ENCODE measurements at regions of chr7 and their contacts with region 1.

Region 1: DNA sequence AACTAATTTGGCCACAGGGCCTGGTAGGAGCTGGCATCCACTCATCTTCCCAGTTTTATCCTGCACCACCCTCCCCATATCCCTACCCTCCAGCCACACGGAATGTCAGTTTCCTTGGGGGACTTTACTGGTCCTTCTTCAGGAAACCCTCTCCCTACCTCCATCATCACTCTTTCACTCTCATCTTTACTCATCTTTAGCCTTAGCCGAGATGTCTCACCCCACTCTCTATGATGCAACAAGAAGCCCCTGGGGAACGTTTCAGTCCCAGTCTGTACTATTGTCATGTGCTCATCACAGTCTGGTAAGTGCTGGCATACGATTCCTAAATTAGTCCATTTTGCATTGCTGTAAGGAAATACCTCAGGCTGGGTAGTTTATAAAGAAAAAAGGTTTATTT is 34.9 kb upstream of the TMEM248 start:
- DNase-seq: no peak
- H3K4me3 Mint-ChIP-seq: no peak overlapping the region
- H3K27ac Mint-ChIP-seq: no peak overlapping the region
- H3K4me1 Mint-ChIP-seq: peaks cover 17% of the 10 kb centered on the region
- H3K27me3 Mint-ChIP-seq: peaks cover 1% of the 10 kb centered on the region

Region 2: DNA sequence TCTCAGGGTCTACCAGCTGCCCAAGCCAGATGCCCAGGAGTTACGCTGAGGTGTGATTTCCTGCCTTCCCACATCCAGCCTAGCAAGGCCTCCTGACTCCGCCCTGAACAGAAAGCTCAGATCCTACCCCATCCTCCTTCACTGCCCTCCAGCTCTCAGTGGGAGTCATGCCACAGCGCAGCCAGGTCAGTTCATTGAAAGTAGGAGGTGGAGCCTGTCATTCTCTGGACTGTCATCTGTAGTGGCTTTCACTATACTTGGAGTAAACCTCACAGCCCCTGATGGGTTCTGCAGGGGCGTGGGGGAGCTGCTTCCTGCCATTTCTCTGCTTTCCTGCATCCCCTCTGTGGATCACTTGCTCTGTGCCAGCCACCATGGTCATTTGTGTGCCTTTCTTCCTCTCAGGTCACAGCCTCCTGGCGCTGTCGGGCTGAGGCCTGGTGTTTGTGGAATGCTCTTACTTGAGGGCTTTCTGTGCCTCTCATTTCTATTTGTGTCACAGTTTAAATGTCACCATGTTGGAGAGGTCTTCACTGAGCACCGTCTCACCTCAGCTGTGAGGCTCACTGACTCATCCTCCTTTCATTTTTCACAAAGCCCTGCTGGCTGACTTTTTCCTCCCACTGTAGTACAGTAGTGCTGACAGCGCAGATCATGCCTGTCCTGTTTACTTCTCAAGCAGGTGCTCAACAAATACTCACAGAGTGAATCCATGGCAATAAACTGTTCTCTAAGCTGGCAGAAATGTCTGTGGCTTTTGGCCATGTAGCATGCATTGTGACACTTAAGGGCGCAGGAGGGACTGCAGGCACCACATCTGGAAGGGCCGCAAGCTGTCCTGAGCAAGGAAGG is 26.1 kb before region 1 on chr7:
- intact Hi-C with region 1: loop called (anchors 1 kb)
- DNase-seq: peak; percentile 14
- H3K4me3 Mint-ChIP-seq: peak overlapping the region; percentile 72
- H3K27ac Mint-ChIP-seq: peak overlapping the region; percentile 99
- H3K4me1 Mint-ChIP-seq: peaks cover 21% of the 10 kb centered on the region
- H3K27me3 Mint-ChIP-seq: no peaks in the 10 kb centered on the region

Region 3: DNA sequence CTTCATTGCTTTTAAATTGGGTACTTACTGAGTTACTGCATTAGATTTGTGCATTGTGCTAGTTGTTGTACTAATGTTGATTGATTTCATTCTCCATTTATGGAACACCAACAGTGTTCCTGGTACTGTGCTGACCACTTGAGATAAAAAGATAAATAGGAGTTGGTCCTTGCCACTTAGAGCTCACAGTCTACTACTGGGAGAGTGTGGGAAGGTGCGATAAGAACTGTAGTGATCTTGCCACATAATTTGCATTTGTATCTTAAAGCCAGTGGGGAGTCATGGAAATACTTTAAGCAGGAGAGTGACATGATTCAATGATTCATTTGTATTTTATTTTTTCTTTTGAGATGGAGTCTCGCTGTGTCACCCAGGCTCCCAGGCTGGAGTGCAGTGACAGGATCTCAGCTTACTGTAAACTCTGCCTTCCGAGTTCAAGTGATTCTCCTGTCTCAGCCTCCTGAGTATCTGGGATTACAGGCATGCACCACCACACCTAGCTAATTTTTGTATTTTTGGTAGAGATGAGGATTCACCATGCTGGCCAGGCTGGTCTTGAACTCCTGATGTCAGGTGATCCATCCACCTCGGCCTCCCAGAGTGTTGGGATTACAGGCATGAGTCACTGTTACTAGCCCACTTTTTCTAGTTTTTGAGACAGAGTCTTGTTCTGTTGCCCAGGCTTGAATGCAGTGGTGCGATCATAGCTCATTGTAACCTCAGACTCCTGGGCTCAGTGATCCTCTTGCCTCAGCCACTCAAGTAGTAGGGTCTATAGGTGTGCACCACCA is 16.3 kb before region 1 on chr7:
- intact Hi-C with region 1: loop called (anchors 1 kb)
- DNase-seq: no peak
- H3K4me3 Mint-ChIP-seq: no peak overlapping the region
- H3K27ac Mint-ChIP-seq: peak overlapping the region; percentile 35
- H3K4me1 Mint-ChIP-seq: no peaks in the 10 kb centered on the region
- H3K27me3 Mint-ChIP-seq: no peaks in the 10 kb centered on the region

Region 4: GRCh38 chr7:66920769-66921395 is 34.7 kb after region 1 on chr7 and contains the start of gene TMEM248:
- intact Hi-C with region 1: no loop called
- DNase-seq: peak; percentile 90
- H3K4me3 Mint-ChIP-seq: peak within 1 kb of the TSS; percentile 98
- H3K27ac Mint-ChIP-seq: peak within 1 kb of the TSS; percentile 98
- H3K4me1 Mint-ChIP-seq: peaks cover 21% of the 10 kb centered on the region
- H3K27me3 Mint-ChIP-seq: no peaks in the 10 kb centered on the region
- total RNA-seq, gene TMEM248: 83.6 and 95.6 TPM in 2 replicates

Region 5: GRCh38 chr7:67006971-67007370 is 120.8 kb after region 1 on chr7:
- intact Hi-C with region 1: no loop called
- DNase-seq: no peak
- H3K4me3 Mint-ChIP-seq: no peak overlapping the region
- H3K27ac Mint-ChIP-seq: no peak overlapping the region
- H3K4me1 Mint-ChIP-seq: no peaks in the 10 kb centered on the region
- H3K27me3 Mint-ChIP-seq: no peaks in the 10 kb centered on the region

Measured in activated T-helper 1 cell treated with anti-CD3 and anti-CD28 coated beads, Interleukin-12 subunit alpha, Interleukin-12 subunit beta, Interleukin-2, Interleukin-4 antibody, amounts not matched to agents 30 ng/mL and 10 ng/mL and 1 ng/mL, durations not matched to agents 14 hours and 24 hours and 36 hours (primary cell).